Activated CD4-positive, alpha-beta memory T cell treated with anti-CD3 and anti-CD28 coated beads for 36 hours (primary cell): ENCODE measurements at regions of chr19 and their contacts with region 1.

Region 1: GRCh38 chr19:6767357-6768235 is at the start of gene SH2D3A:
- DNase-seq: peak; percentile 97
- H3K4me3 Mint-ChIP-seq: peak within 1 kb of the TSS; percentile 85
- H3K27ac Mint-ChIP-seq: peak within 1 kb of the TSS; percentile 92
- H3K4me1 Mint-ChIP-seq: peaks cover 39% of the 10 kb centered on the region
- H3K27me3 Mint-ChIP-seq: no peaks in the 10 kb centered on the region
- total RNA-seq, gene SH2D3A: 17.1 to 18.2 TPM

Region 2: DNA sequence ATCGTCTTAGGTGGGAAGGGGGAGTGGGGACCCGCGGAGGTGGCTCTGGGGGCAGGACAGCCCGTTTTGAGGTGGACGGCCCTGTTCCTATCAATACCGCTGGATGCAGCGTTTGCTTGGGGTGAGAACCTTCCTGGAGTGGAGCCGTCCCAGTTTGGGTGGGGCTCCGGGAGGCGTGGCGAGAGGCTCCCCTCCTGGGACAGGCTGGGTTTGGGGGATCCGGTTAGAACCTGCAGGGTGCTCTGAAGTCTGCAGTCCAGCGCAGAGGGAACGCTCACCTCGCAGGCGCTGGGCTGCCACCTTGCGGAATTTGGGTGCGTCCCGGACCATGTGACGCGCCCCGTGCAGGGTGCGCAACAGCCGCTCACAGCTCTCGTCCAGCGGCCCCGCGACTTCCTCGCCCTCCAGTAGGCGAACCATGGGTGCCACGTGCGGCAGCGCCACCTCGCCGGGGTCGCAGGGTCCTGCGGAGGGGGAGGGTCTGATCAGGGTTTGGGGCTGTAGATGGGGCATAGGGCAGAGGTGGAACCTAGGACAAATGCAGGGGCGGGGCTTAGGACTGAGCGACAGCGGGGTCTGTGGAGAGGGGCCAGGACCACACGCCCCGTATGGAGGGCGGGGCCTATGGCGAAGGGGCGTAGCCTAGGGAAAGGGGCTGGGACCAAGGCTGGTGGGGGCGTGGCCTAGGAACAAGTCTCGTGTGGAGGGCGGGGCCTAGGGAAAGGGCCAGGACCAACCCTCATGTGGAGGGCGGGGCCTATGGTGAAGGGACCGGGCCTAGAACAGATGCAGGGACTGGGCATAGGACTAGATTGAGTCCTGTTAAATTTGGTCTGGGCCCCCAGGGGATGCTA is 14.2 kb before region 1 on chr19:
- CTCF ChIA-PET with region 1: interaction called, 4 read pairs
- POLR2A ChIA-PET with region 1: no interaction called
- intact Hi-C with region 1: loop called (anchors 1 kb)
- DNase-seq: peak; percentile 88
- H3K4me3 Mint-ChIP-seq: peak overlapping the region; percentile 68
- H3K27ac Mint-ChIP-seq: peak overlapping the region; percentile 67
- H3K4me1 Mint-ChIP-seq: peaks cover 13% of the 10 kb centered on the region
- H3K27me3 Mint-ChIP-seq: no peaks in the 10 kb centered on the region

Region 3: DNA sequence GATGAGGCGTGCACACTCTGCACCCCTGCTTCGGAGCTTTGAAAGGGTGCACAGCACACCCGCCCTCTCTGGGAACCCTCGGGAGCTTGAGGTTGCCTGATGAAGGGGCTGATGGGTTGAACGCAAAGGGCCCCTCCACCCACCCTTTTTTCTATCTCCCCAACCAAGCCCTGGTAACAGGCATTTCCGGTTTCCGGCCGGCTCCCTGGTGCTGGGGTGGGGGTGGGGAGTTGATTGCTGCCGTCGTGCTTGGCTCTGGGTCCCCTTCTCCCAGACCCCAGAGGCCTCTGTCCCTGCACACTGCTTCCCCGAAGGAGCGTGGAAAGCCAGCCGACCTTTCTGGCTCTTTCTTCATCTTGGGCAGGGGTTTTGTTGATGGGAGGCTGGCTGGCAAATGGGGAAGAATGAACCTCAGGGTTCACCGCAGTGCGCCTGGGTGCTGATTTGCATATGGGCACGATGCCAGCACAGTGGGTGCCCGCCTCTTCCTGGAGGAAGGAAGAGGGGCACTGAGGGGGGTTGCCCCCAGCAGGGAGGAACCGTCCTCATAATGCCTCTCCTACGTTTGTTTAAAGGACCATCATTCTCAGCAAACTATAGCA is 34.0 kb after region 1 on chr19:
- CTCF ChIA-PET with region 1: interaction called, 19 read pairs
- POLR2A ChIA-PET with region 1: interaction called, 59 read pairs
- intact Hi-C with region 1: loop called (anchors 1 kb)
- DNase-seq: peak; percentile 89
- H3K4me3 Mint-ChIP-seq: peak overlapping the region; percentile 75
- H3K27ac Mint-ChIP-seq: peak overlapping the region; percentile 94
- H3K4me1 Mint-ChIP-seq: peaks cover 53% of the 10 kb centered on the region
- H3K27me3 Mint-ChIP-seq: no peaks in the 10 kb centered on the region

Region 4: DNA sequence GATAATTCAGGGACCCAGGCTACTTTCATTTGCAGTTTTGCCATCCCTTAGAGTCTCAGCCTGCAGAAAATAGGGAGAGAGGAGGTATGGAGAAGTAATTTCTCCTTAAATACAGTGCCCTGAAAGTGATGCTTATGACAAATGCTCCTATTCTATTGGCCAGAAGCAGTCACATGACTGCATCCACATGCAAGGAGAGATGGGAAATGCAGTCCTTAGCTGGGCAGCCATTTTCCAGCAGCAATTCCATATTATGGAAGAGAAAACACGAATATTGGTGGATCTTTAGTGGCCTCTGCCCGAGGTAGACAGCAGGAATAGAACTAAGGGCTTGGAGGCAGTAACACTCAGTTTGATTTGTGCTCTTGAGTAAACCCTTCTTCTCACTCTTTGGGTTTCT is 44.3 kb after region 1 on chr19:
- CTCF ChIA-PET with region 1: interaction called, 15 read pairs
- POLR2A ChIA-PET with region 1: interaction called, 8 read pairs
- intact Hi-C with region 1: loop called (anchors 2 kb)
- DNase-seq: no peak
- H3K4me3 Mint-ChIP-seq: no peak overlapping the region
- H3K27ac Mint-ChIP-seq: peak overlapping the region; percentile 68
- H3K4me1 Mint-ChIP-seq: peaks cover 68% of the 10 kb centered on the region
- H3K27me3 Mint-ChIP-seq: no peaks in the 10 kb centered on the region